Sigmoid colon (tissue), 7 donors: ENCODE measurements at regions of chr1 and their contacts with region 1.

Region 1: GRCh38 chr1:192808518-192809306 is at the start of gene RGS2:
- DNase-seq: peak; percentile 98
- H3K4me3 ChIP-seq: peak within 1 kb of the TSS; percentile 60 to 82 (median 78)
- H3K27ac ChIP-seq: peak within 1 kb of the TSS; percentile 94 to 98 (median 96)
- H3K4me1 ChIP-seq: peaks cover 0 to 24% (median 11%) of the 10 kb centered on the region in 4 donors
- H3K27me3 ChIP-seq: no peaks in the 10 kb centered on the region
- CTCF ChIP-seq: no peak
- EP300 ChIP-seq: peak in 3 of 4 donors; percentile 54 to 78 (median 57)
- POLR2A ChIP-seq: peak; percentile 99
- total RNA-seq, gene RGS2: 366 to 667 (median 434) TPM

Region 2: GRCh38 chr1:192609110-192610079 is 199.3 kb before region 1 on chr1:
- intact Hi-C with region 1: loop called (anchors 5 kb)
- DNase-seq: peak; percentile 84
- H3K4me3 ChIP-seq: no peak overlapping the region
- H3K27ac ChIP-seq: peak overlapping the region in 3 of 4 donors; percentile 9 to 50 (median 43)
- H3K4me1 ChIP-seq: peaks cover 0 to 23% (median 10%) of the 10 kb centered on the region in 4 donors
- H3K27me3 ChIP-seq: no peaks in the 10 kb centered on the region
- CTCF ChIP-seq: no peak
- EP300 ChIP-seq: no peak
- POLR2A ChIP-seq: no peak

Region 3: GRCh38 chr1:192951691-192952460 is 143.2 kb after region 1 on chr1:
- intact Hi-C with region 1: loop called (anchors 5 kb)
- DNase-seq: peak; percentile 74
- H3K4me3 ChIP-seq: no peak overlapping the region
- H3K27ac ChIP-seq: peak overlapping the region in 3 of 4 donors; percentile 50 to 70 (median 54)
- H3K4me1 ChIP-seq: peaks cover 0 to 24% (median 20%) of the 10 kb centered on the region in 4 donors
- H3K27me3 ChIP-seq: no peaks in the 10 kb centered on the region
- CTCF ChIP-seq: no peak
- EP300 ChIP-seq: peak in 1 of 4 donors; percentile 41
- POLR2A ChIP-seq: no peak

Region 4: GRCh38 chr1:192962901-192963300 is 154.2 kb after region 1 on chr1:
- intact Hi-C with region 1: no loop called
- DNase-seq: no peak
- H3K4me3 ChIP-seq: no peak overlapping the region
- H3K27ac ChIP-seq: no peak overlapping the region
- H3K4me1 ChIP-seq: no peaks in the 10 kb centered on the region
- H3K27me3 ChIP-seq: no peaks in the 10 kb centered on the region
- CTCF ChIP-seq: no peak
- EP300 ChIP-seq: no peak
- POLR2A ChIP-seq: no peak

Region 5: GRCh38 chr1:193019442-193020026 is 210.8 kb after region 1 on chr1:
- intact Hi-C with region 1: loop called (anchors 2 kb)
- DNase-seq: no peak
- H3K4me3 ChIP-seq: peak overlapping the region in 1 of 4 donors; percentile 10
- H3K27ac ChIP-seq: peak overlapping the region in 3 of 4 donors; percentile 26 to 63 (median 54)
- H3K4me1 ChIP-seq: peaks cover 0 to 39% (median 17%) of the 10 kb centered on the region in 4 donors
- H3K27me3 ChIP-seq: no peaks in the 10 kb centered on the region
- CTCF ChIP-seq: peak; percentile 20 to 58 (median 46)
- EP300 ChIP-seq: no peak
- POLR2A ChIP-seq: no peak

Region 6: DNA sequence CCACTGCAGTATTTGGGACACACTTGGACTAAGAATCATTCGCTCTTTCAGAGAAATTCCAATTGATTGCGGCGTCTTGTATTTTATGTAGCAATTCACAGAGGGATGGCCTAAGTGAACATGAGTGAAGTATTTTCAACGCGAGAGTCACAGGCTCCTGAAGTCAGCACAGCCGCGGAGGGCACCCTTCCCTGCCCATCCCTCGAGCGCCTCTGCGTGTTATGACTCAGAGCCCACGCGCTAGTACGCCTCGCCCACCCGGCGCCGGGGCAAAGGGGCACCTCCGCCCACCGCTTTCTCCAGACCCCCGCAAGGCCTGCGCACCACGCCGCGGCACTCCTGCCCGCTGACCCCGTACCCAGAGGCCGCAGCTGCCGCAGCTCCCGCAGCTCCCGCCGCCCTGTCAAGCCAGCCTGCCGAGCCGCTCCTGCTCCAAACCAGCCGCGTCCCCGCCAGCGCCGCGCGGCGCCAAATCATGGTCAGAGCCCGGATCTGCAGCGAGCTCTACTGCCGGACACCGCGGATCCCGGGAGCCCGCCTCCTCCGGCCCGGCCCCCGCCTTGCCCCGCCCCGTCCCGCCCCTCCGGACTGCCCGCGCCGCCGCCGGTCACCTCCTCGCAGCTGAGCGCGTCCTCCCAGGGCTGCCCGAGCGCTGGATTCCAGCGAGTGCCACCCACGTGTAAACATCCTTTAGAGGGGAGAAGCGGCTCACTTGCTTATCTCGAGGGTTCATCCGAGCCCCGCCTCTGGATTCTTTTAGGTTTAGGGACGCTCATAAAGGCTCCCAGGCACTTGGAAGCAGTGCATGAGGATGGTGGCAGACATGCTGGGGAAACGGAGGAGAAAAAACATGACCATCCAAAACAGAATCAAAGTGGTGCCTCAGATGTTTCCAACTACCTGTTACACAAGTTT is 296.5 kb after region 1 on chr1 and contains the start of gene GLRX2:
- intact Hi-C with region 1: loop called (anchors 5 kb)
- DNase-seq: peak; percentile 93
- H3K4me3 ChIP-seq: peak within 1 kb of the TSS; percentile 74 to 96 (median 84)
- H3K27ac ChIP-seq: peak within 1 kb of the TSS; percentile 95 to 97 (median 96)
- H3K4me1 ChIP-seq: peaks cover 0 to 25% (median 15%) of the 10 kb centered on the region in 4 donors
- H3K27me3 ChIP-seq: no peaks in the 10 kb centered on the region
- CTCF ChIP-seq: peak in 1 of 4 experiments; percentile 5
- EP300 ChIP-seq: no peak
- POLR2A ChIP-seq: peak; percentile 53 to 63
- total RNA-seq, gene GLRX2: 4.2 to 9.2 (median 7.1) TPM

Region 7: GRCh38 chr1:193211539-193211938 is 402.8 kb after region 1 on chr1:
- intact Hi-C with region 1: no loop called
- DNase-seq: no peak
- H3K4me3 ChIP-seq: no peak overlapping the region
- H3K27ac ChIP-seq: no peak overlapping the region
- H3K4me1 ChIP-seq: no peaks in the 10 kb centered on the region
- H3K27me3 ChIP-seq: no peaks in the 10 kb centered on the region
- CTCF ChIP-seq: no peak
- EP300 ChIP-seq: no peak
- POLR2A ChIP-seq: no peak